ENCODE measurements at regions of chr5 and their contacts with region 1.

Region 1: GRCh38 chr5:123610665-123611405 is 98.9 kb downstream of the CSNK1G3 start:
- DNase-seq: peak; percentile 17
- ATAC-seq: peak; percentile 81
- H3K4me3 ChIP-seq: no peak overlapping the region
- H3K27ac ChIP-seq: no peak overlapping the region
- H3K4me1 ChIP-seq: peaks cover under 1% of the 10 kb centered on the region; the same call in 1 of the 2 replicates
- H3K27me3 ChIP-seq: no peaks in the 10 kb centered on the region
- CTCF ChIP-seq: peak; percentile 89 to 96 (median 91)
- EP300 ChIP-seq: no peak
- POLR2A ChIP-seq: no peak
- RAD21 ChIP-seq: peak; percentile 99

Region 2: DNA sequence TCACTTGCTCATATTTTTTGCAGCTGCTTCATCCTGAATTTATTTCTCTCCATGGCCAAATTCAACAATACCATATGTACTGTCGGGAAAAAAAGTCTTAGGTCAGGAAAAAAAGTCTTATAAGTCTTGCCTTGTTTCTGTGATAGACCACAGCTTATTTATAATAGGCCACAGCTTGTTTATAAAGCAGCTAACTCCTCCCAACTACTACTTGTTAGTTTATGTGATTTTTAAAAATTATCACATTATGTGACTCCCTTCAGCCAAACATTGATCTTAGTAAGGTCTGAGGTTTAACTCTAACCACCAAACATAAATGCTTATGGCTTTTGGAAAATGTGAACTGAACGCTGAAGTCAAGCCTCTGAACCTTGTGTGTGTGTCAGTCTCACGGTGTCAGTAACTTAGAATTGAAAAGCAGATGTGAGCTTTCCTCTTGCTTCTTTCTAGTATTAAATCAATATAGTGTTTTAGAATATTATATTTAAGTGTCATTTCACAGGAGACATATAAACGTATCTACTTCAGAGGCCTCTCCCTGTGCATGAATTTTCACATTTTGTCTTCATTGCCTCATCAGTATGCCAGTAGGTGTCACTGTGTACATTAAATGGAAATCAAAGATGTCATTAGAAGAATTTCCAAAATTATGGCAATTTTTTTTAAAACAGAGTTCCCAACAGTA is 714.1 kb before region 1 on chr5:
- CTCF ChIA-PET with region 1: interaction called, 4 read pairs
- POLR2A ChIA-PET with region 1: no interaction called
- RAD21 ChIA-PET with region 1: interaction called, 3 read pairs
- SMC1A ChIA-PET with region 1: interaction called, 5 read pairs
- in situ Hi-C with region 1: no loop called
- intact Hi-C with region 1: loop called (anchors 10 kb)
- DNase-seq: no peak
- ATAC-seq: 0 out of 3 replicates have a peak, but pooled peaks have one; percentile 33
- H3K4me3 ChIP-seq: no peak overlapping the region
- H3K27ac ChIP-seq: no peak overlapping the region
- H3K4me1 ChIP-seq: no peaks in the 10 kb centered on the region
- H3K27me3 ChIP-seq: no peaks in the 10 kb centered on the region
- CTCF ChIP-seq: peak; percentile 30 to 49 (median 48); a peak in 5 of 6 replicates
- EP300 ChIP-seq: no peak
- POLR2A ChIP-seq: no peak
- RAD21 ChIP-seq: peak; percentile 70

Region 3: DNA sequence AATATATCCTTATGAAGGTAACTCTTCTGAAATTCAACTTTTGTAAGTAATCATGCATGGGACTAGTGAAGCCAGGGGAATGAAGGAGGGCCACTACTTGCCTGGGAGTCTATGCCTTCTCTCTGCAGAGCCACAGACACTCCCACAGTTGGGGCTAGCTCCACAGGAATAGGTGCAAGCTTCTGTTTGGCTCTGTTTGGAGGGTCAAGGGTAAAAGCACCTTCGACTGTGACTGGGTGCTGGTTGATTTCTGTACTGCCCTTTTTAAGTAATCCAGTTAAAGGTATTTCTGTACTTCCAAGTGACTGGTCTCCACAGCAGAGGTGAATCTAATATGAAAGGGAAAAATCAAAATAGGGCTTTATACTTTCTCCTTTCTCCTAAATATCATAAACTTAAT is 219.8 kb before region 1 on chr5:
- CTCF ChIA-PET with region 1: interaction called, 5 read pairs
- POLR2A ChIA-PET with region 1: no interaction called
- RAD21 ChIA-PET with region 1: interaction called, 11 read pairs
- SMC1A ChIA-PET with region 1: interaction called, 5 read pairs
- in situ Hi-C with region 1: no loop called
- intact Hi-C with region 1: loop called (anchors 10 kb)
- DNase-seq: no peak
- ATAC-seq: no peak
- H3K4me3 ChIP-seq: no peak overlapping the region
- H3K27ac ChIP-seq: no peak overlapping the region
- H3K4me1 ChIP-seq: no peaks in the 10 kb centered on the region
- H3K27me3 ChIP-seq: no peaks in the 10 kb centered on the region
- CTCF ChIP-seq: no peak
- EP300 ChIP-seq: no peak
- POLR2A ChIP-seq: no peak
- RAD21 ChIP-seq: no peak

Region 4: DNA sequence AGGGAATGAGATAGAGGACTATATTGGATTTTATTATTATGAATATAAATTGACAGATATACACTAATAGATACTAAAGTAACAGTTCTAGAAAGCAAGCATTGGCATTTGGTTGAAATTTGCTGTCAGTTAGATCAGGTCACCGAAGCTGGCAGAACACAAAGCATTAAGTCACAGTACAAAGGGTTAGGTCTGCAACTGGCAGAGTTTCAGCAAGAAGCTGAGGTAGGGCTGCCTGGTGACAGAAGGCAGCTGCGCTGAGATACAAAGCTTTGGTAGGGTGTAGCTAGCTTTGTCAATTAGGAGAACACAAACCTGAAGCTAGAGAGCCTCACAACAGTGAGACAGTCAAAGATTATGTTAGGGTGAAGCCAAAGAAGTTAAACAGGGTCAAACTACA is 105.2 kb before region 1 on chr5:
- CTCF ChIA-PET with region 1: interaction called, 14 read pairs
- POLR2A ChIA-PET with region 1: no interaction called
- RAD21 ChIA-PET with region 1: no interaction called
- SMC1A ChIA-PET with region 1: interaction called, 4 read pairs
- in situ Hi-C with region 1: no loop called
- intact Hi-C with region 1: no loop called
- DNase-seq: no peak
- ATAC-seq: no peak
- H3K4me3 ChIP-seq: no peak overlapping the region
- H3K27ac ChIP-seq: no peak overlapping the region
- H3K4me1 ChIP-seq: no peaks in the 10 kb centered on the region
- H3K27me3 ChIP-seq: no peaks in the 10 kb centered on the region
- CTCF ChIP-seq: no peak
- EP300 ChIP-seq: no peak
- POLR2A ChIP-seq: no peak
- RAD21 ChIP-seq: no peak

Region 5: GRCh38 chr5:123594434-123594833 is 16.4 kb before region 1 on chr5:
- CTCF ChIA-PET with region 1: interaction called, 23 read pairs
- POLR2A ChIA-PET with region 1: no interaction called
- RAD21 ChIA-PET with region 1: interaction called, 6 read pairs
- SMC1A ChIA-PET with region 1: interaction called, 13 read pairs
- in situ Hi-C with region 1: no loop called
- intact Hi-C with region 1: no loop called
- DNase-seq: no peak
- ATAC-seq: no peak
- H3K4me3 ChIP-seq: no peak overlapping the region
- H3K27ac ChIP-seq: no peak overlapping the region
- H3K4me1 ChIP-seq: no peaks in the 10 kb centered on the region
- H3K27me3 ChIP-seq: no peaks in the 10 kb centered on the region
- CTCF ChIP-seq: no peak
- EP300 ChIP-seq: no peak
- POLR2A ChIP-seq: no peak
- RAD21 ChIP-seq: no peak

Region 6: DNA sequence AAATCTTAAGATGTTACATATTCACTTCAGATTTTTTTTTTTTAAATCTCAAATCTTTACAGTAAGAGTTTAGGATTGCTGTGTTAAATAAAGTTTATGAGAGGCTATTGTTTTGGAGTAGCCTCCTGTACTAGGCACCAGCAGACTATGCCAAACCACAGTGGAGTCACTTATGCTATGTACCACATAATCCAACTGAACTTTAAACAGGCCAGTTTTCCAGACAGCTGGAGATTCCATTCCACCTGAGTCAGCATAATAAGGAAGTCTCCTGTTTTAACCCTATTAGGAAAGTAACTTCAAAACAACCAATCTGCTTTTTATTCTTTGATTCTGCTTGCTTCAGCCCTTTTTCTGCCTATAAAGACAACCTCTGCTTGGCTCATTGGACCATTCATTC is 106.3 kb after region 1 on chr5:
- CTCF ChIA-PET with region 1: no interaction called
- POLR2A ChIA-PET with region 1: no interaction called
- RAD21 ChIA-PET with region 1: no interaction called
- SMC1A ChIA-PET with region 1: no interaction called
- in situ Hi-C with region 1: no loop called
- intact Hi-C with region 1: no loop called
- DNase-seq: no peak
- ATAC-seq: no peak
- H3K4me3 ChIP-seq: no peak overlapping the region
- H3K27ac ChIP-seq: no peak overlapping the region
- H3K4me1 ChIP-seq: no peaks in the 10 kb centered on the region
- H3K27me3 ChIP-seq: no peaks in the 10 kb centered on the region
- CTCF ChIP-seq: no peak
- EP300 ChIP-seq: no peak
- POLR2A ChIP-seq: no peak
- RAD21 ChIP-seq: no peak